WTC11 (cell line): ENCODE measurements at regions of chr1 and their contacts with region 1.

Region 1: GRCh38 chr1:224700915-224701531 is 84.9 kb downstream of the CNIH3 start:
- DNase-seq: peak; percentile 73
- ATAC-seq: peak; percentile 82
- H3K4me3 Mint-ChIP-seq: no peak overlapping the region
- H3K27ac Mint-ChIP-seq: no peak overlapping the region
- H3K4me1 Mint-ChIP-seq: peaks cover 41% of the 10 kb centered on the region
- H3K27me3 Mint-ChIP-seq: no peaks in the 10 kb centered on the region
- CTCF ChIP-seq: peak; percentile 23; the same call in 1 of the 2 replicates

Region 2: GRCh38 chr1:224609333-224609732 is 91.7 kb before region 1 on chr1:
- CTCF ChIA-PET with region 1: no interaction called
- POLR2A ChIA-PET with region 1: no interaction called
- DNase-seq: no peak
- ATAC-seq: no peak
- H3K4me3 Mint-ChIP-seq: no peak overlapping the region
- H3K27ac Mint-ChIP-seq: no peak overlapping the region
- H3K4me1 Mint-ChIP-seq: peaks cover 54% of the 10 kb centered on the region
- H3K27me3 Mint-ChIP-seq: peaks cover 61% of the 10 kb centered on the region
- CTCF ChIP-seq: no peak

Region 3: DNA sequence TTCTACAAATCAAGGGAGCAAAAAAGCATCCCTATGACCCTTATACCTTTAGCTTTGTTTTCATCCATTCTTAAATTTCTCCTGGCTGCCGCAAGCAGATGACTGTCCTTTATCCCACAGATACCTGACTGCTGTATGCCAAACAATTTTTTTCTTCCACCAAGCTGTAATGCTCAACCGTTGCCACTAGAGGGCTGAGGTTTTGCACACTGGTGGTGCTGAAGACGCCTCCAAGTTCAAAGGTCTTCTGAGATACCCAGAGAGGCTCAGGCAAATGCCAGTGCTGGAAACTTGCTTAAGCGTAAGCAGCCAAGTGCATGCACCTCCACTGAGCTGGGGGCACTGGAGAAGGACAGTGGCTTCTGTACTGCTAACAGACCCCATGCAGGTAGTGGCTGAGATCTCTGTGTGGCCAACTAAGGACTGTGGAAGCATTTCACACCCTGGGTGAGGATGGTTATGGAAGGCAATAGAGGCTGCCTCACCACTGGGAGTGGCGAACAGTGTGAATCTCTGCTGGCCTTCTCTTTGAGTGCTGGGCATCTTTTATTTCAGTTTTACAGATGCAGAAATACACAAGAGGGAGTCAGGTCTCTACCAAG is 56.4 kb before region 1 on chr1:
- CTCF ChIA-PET with region 1: interaction called, 11 read pairs
- POLR2A ChIA-PET with region 1: no interaction called
- DNase-seq: peak; percentile 73
- ATAC-seq: peak; percentile 72
- H3K4me3 Mint-ChIP-seq: no peak overlapping the region
- H3K27ac Mint-ChIP-seq: no peak overlapping the region
- H3K4me1 Mint-ChIP-seq: peaks cover 24% of the 10 kb centered on the region
- H3K27me3 Mint-ChIP-seq: no peaks in the 10 kb centered on the region
- CTCF ChIP-seq: peak; percentile 93

Region 4: GRCh38 chr1:224720226-224720625 is 19.2 kb after region 1 on chr1:
- CTCF ChIA-PET with region 1: interaction called, 17 read pairs
- POLR2A ChIA-PET with region 1: no interaction called
- DNase-seq: no peak
- ATAC-seq: peak; percentile 72
- H3K4me3 Mint-ChIP-seq: no peak overlapping the region
- H3K27ac Mint-ChIP-seq: no peak overlapping the region
- H3K4me1 Mint-ChIP-seq: peaks cover 22% of the 10 kb centered on the region
- H3K27me3 Mint-ChIP-seq: no peaks in the 10 kb centered on the region
- CTCF ChIP-seq: no peak

Region 5: GRCh38 chr1:224856973-224857372 is 155.9 kb after region 1 on chr1:
- CTCF ChIA-PET with region 1: interaction called, 131 read pairs
- POLR2A ChIA-PET with region 1: no interaction called
- DNase-seq: no peak
- ATAC-seq: no peak
- H3K4me3 Mint-ChIP-seq: no peak overlapping the region
- H3K27ac Mint-ChIP-seq: no peak overlapping the region
- H3K4me1 Mint-ChIP-seq: peaks cover 10% of the 10 kb centered on the region
- H3K27me3 Mint-ChIP-seq: no peaks in the 10 kb centered on the region
- CTCF ChIP-seq: no peak

Region 6: GRCh38 chr1:224894918-224895317 is 193.9 kb after region 1 on chr1:
- CTCF ChIA-PET with region 1: interaction called, 29 read pairs
- POLR2A ChIA-PET with region 1: no interaction called
- DNase-seq: no peak
- ATAC-seq: peak; percentile 96
- H3K4me3 Mint-ChIP-seq: no peak overlapping the region
- H3K27ac Mint-ChIP-seq: no peak overlapping the region
- H3K4me1 Mint-ChIP-seq: no peaks in the 10 kb centered on the region
- H3K27me3 Mint-ChIP-seq: no peaks in the 10 kb centered on the region; the same call in 1 of the 2 replicates
- CTCF ChIP-seq: peak; percentile 46